OCI-LY7 (cell line): ENCODE measurements at regions of chr6 and their contacts with region 1.

Region 1: GRCh38 chr6:159968440-159969203 is at the start of gene IGF2R:
- DNase-seq: peak; percentile 96
- H3K4me3 ChIP-seq: peak within 1 kb of the TSS; percentile 92
- H3K27ac ChIP-seq: peak within 1 kb of the TSS; percentile 19
- H3K4me1 ChIP-seq: peaks cover 17% of the 10 kb centered on the region
- CTCF ChIP-seq: no peak
- total RNA-seq, gene IGF2R: 17.9 and 19.3 TPM in 2 replicates

Region 2: GRCh38 chr6:159979136-159979874 is 10.7 kb after region 1 on chr6:
- CTCF ChIA-PET with region 1: interaction called, 3 read pairs
- POLR2A ChIA-PET with region 1: interaction called, 14 read pairs
- intact Hi-C with region 1: loop called (anchors 1 kb)
- DNase-seq: peak; percentile 80
- H3K4me3 ChIP-seq: peak overlapping the region; percentile 11
- H3K27ac ChIP-seq: peak overlapping the region; percentile 25
- H3K4me1 ChIP-seq: peaks cover 55% of the 10 kb centered on the region
- CTCF ChIP-seq: no peak

Region 3: DNA sequence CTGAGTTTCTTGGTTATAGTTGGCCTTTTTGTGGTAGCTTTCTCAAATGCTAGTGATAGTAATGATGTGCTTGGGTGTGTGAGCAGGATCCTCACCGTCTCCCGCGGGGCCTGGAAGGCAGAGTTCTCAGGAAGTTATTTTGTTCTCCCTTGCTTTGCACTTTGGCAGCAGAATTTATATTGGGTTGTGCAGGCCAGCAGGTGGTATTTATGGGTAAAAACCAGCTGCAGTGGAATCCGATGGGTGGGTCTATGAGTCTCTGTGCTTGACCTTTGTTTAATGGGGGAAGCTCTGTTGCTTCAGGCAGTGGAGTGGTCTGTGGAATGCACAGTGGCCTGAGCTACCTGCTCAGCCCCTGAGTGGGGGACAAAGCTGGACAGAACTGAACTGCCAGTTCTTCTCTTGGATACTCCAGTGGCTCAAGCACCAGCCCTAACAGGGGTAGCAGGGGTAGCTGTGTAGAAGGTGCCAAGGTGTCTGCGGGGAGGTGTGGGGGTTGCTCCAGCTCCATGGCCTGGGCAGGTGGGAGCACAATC is 27.5 kb after region 1 on chr6:
- CTCF ChIA-PET with region 1: no interaction called
- POLR2A ChIA-PET with region 1: interaction called, 10 read pairs
- intact Hi-C with region 1: no loop called
- DNase-seq: no peak
- H3K4me3 ChIP-seq: no peak overlapping the region
- H3K27ac ChIP-seq: no peak overlapping the region
- H3K4me1 ChIP-seq: no peaks in the 10 kb centered on the region
- CTCF ChIP-seq: no peak

Region 4: DNA sequence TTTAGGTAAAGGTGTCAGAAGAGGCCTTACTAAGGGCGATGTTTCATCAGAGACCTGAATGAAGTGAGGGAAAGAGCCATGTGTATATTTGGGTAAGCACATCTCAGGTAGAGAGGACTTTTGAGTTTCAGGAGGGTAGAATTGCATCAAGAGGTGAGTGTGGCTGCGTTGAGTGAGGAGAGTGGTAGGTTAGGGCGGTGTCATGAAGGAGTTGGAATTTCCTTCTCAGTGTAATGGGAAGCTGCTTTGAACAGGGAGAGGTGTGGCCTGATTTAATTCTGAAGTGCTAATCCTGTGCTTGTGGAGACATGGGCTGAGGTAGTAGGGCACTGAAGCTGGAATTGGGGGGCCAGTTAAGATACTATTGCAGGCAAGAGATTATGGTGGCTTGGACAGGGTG is 54.2 kb after region 1 on chr6:
- CTCF ChIA-PET with region 1: no interaction called
- POLR2A ChIA-PET with region 1: no interaction called
- intact Hi-C with region 1: no loop called
- DNase-seq: no peak
- H3K4me3 ChIP-seq: no peak overlapping the region
- H3K27ac ChIP-seq: no peak overlapping the region
- H3K4me1 ChIP-seq: no peaks in the 10 kb centered on the region
- CTCF ChIP-seq: no peak